Activated CD4-positive, alpha-beta memory T cell treated with anti-CD3 and anti-CD28 coated beads for 36 hours (primary cell): ENCODE measurements at regions of chr11 and their contacts with region 1.

Region 1: DNA sequence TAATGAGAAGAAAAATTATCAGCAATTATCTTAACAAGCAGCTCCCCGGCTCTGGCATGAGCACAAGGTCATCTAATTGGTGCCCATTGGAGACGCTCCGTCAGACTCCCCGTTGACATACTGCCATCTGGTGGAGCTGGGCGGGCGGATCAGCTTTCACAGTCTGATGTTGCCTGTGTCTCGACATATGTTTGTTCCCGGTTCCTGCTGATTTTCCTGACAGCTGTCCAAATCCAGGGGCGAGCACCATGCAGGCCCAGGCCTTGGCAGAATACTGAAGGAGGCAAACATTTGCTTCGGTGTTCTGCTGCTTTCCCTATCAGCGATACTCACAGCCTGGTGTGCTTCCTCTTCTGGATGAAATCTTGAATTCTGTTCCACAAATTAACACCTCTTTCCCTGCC is 43.8 kb upstream of the BARX2 start:
- DNase-seq: peak; percentile 78
- H3K4me3 Mint-ChIP-seq: no peak overlapping the region
- H3K27ac Mint-ChIP-seq: no peak overlapping the region
- H3K4me1 Mint-ChIP-seq: peaks cover 2% of the 10 kb centered on the region
- H3K27me3 Mint-ChIP-seq: no peaks in the 10 kb centered on the region

Region 2: DNA sequence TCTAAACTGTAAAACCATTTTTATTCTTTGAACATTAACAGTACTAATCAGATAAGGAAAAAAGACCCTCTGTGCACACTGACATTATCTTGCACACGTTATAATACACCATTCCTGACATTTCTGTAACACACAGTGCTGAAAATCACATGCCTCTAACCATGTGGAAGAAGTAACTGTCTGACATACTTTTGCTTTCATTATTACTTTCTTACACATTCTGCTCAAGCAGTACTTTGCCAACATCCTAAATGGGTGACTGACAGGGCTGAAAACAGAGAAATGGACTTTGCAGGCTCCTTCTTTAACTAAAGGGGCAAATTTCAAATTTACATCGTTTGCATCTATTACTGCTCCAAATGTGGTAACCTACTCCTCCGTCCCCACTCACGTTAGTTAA is 366.4 kb before region 1 on chr11:
- CTCF ChIA-PET with region 1: no interaction called
- POLR2A ChIA-PET with region 1: no interaction called
- intact Hi-C with region 1: loop called (anchors 5 kb)
- DNase-seq: no peak
- H3K4me3 Mint-ChIP-seq: no peak overlapping the region
- H3K27ac Mint-ChIP-seq: no peak overlapping the region
- H3K4me1 Mint-ChIP-seq: peaks cover 30% of the 10 kb centered on the region
- H3K27me3 Mint-ChIP-seq: peaks cover 2% of the 10 kb centered on the region

Region 3: DNA sequence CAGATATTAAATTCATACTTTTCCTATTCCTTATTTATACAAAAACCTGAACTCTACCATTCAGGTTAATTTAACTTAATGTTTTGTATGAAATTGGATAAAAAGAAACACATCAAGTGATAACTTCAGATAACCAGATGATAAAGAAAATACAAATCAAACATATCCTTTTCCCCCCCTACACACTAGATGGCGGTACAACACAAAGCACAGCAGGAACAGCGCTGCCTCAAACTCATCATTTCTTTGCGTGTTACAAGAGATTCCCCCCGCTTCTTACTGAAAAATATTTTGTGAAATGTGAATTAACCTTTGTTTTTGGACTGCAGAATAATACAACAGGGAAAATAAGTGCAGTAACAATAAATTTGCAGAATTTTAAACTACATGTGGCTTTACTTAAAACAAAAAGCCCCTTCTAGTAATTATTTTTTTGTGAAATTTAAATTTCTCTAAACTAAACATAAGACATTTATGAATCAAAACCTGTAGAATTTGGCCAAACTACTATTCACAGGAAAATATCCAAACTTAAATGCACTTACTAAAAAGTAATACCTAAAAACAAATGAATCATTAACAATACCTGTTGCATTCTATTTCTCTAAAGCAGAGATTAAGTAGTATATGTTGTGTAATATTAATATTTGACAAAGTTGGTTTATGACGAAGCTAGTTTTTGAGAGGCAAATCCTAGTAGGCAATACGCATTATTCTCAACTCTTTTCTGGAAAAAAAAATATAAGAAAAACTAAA is 214.1 kb before region 1 on chr11:
- CTCF ChIA-PET with region 1: interaction called, 63 read pairs
- POLR2A ChIA-PET with region 1: no interaction called
- intact Hi-C with region 1: loop called (anchors 1 kb)
- DNase-seq: peak; percentile 51
- H3K4me3 Mint-ChIP-seq: no peak overlapping the region
- H3K27ac Mint-ChIP-seq: no peak overlapping the region
- H3K4me1 Mint-ChIP-seq: no peaks in the 10 kb centered on the region
- H3K27me3 Mint-ChIP-seq: no peaks in the 10 kb centered on the region

Region 4: GRCh38 chr11:129230006-129230405 is 101.9 kb before region 1 on chr11:
- CTCF ChIA-PET with region 1: interaction called, 16 read pairs
- POLR2A ChIA-PET with region 1: no interaction called
- intact Hi-C with region 1: loop called (anchors 1 kb)
- DNase-seq: no peak
- H3K4me3 Mint-ChIP-seq: no peak overlapping the region
- H3K27ac Mint-ChIP-seq: no peak overlapping the region
- H3K4me1 Mint-ChIP-seq: no peaks in the 10 kb centered on the region
- H3K27me3 Mint-ChIP-seq: no peaks in the 10 kb centered on the region

Region 5: GRCh38 chr11:129252621-129253020 is 79.3 kb before region 1 on chr11:
- CTCF ChIA-PET with region 1: no interaction called
- POLR2A ChIA-PET with region 1: no interaction called
- intact Hi-C with region 1: no loop called
- DNase-seq: no peak
- H3K4me3 Mint-ChIP-seq: no peak overlapping the region
- H3K27ac Mint-ChIP-seq: no peak overlapping the region
- H3K4me1 Mint-ChIP-seq: peaks cover 7% of the 10 kb centered on the region
- H3K27me3 Mint-ChIP-seq: no peaks in the 10 kb centered on the region

Region 6: DNA sequence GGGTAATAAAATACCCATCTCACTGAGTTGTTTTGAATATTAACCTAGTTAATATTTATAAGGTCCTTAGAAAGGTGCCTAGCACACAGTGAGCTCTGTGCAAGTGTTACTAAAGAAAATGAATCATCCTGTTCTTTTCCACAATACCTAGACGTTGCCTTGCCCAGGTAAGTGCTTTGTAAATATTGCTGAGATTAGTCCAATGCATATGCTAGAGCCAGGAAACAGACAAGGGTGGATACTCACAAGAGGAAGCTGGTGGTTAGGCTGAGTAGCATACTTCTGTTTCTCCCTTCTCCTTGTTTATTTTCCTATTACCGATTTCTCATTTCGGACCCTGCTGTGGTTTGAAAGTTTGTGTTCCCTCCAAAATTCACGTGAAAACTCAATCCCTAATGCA is 14.3 kb before region 1 on chr11:
- CTCF ChIA-PET with region 1: interaction called, 21 read pairs
- POLR2A ChIA-PET with region 1: no interaction called
- intact Hi-C with region 1: no loop called
- DNase-seq: no peak
- H3K4me3 Mint-ChIP-seq: no peak overlapping the region
- H3K27ac Mint-ChIP-seq: no peak overlapping the region
- H3K4me1 Mint-ChIP-seq: no peaks in the 10 kb centered on the region
- H3K27me3 Mint-ChIP-seq: no peaks in the 10 kb centered on the region